Right cardiac atrium (tissue), 5 donors: ENCODE measurements at regions of chr5 and their contacts with region 1.

Region 1: DNA sequence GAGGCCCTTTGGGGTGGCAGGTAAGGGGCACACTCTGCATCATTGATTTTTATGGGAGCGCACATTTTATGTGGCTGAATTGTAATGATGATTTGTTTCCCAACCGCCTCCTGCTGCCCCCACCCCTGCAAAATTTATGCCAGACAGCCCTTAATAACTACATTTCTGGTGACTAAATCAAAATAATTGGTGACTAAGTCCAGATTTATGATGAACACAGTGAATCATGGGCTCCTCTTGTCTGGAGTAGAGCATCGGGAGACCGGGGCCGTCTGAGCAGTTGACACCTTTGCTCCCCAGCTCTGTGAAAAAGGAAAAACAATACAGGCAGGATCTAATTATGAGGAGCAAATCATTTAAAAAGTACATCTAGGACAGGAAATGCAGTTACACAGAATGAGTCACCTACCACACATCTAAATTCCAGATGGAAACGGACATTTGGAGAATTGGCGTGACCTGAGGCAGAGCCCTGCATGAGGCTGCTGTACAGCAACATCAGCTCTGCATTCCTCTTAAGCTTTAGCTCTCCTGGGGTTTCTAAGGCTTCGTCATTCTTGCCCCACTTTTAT is 58.9 kb downstream of the DOCK2 start:
- DNase-seq: no peak
- ATAC-seq: no peak
- H3K4me3 ChIP-seq: no peak overlapping the region
- H3K27ac ChIP-seq: no peak overlapping the region
- H3K4me1 ChIP-seq: no peaks in the 10 kb centered on the region
- H3K27me3 ChIP-seq: no peaks in the 10 kb centered on the region

Region 2: GRCh38 chr5:169895926-169896325 is 199.9 kb after region 1 on chr5:
- intact Hi-C with region 1: no loop called
- DNase-seq: peak; percentile 83 to 94 (median 89)
- ATAC-seq: peak; percentile 79 to 91
- H3K4me3 ChIP-seq: no peak overlapping the region
- H3K27ac ChIP-seq: no peak overlapping the region
- H3K4me1 ChIP-seq: no peaks in the 10 kb centered on the region
- H3K27me3 ChIP-seq: no peaks in the 10 kb centered on the region

Region 3: DNA sequence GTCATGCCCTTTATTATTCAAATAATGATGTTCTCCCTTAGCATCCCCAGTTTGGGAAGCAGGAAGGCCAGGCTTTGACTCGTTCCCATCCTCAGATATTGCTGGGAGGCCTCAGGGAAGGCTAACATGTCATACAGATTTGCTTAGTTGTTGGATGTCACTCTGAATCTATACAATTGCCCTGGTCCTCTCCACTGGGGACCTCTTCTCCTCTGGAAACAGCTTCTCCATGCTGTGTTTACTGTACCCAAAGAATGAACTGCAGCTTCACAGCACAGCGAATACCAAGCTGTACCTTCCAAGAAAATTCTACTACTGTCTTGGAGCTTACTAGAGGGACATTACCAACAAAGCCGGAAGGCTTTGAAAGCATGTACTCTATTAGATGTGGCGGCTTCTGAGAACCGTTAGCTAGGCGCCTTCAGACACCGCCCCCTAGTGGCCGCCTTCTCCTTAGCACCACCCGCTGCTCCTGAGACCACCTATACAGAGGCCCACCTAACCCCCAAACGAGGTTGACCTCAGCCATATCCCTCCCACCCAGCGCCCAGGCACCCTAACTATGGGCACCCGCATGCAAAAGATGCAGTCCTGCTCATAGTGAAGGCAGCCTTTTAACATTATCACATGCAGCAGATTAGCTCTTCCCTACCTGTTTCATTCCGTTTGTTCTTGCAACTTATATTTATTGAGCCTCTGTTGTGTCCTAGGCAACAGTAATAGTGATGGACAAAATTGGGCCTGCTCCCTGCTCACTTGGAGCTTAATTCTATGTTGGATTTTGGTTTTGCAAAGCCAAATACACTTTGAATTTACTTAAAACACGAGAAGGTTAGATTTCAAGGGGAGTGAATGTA is 374.8 kb after region 1 on chr5:
- intact Hi-C with region 1: loop called in 2 of 4 experiments (anchors 5 to 10 kb)
- DNase-seq: peak in 2 of 3 donors; percentile 66 to 78
- ATAC-seq: peak; percentile 58 to 61
- H3K4me3 ChIP-seq: no peak overlapping the region
- H3K27ac ChIP-seq: no peak overlapping the region
- H3K4me1 ChIP-seq: no peaks in the 10 kb centered on the region
- H3K27me3 ChIP-seq: no peaks in the 10 kb centered on the region

Region 4: DNA sequence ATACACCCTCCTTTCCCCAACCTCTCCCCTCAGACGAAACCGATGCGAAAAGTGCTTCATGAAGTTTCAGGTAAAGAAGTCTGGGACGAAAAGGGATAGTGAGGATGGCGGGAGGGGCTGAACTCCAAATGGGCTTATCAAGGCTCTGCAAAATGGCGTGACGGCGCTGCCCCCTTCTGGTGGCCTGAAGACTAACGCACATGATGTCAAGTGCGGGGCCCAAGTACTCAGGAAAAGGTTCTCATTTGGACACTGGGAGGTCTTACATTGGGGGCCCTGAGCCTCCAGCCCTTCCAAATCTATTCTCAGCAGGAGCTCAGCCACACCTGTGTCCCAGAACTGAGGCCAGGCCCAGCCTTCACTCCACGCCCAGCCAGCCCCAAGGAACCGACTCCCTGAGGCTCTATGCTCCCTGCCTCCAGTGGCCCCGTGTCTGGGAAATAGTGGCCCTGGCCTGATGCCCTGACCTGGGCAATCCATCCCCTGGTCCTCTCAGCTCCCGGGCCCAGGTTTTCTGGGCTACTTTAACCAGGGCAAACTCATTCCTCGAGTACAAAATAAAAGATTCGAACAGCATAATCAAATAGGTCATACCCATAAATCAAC is 927.7 kb after region 1 on chr5:
- intact Hi-C with region 1: no loop called
- DNase-seq: peak in 2 of 3 donors; percentile 71 to 78
- ATAC-seq: peak; percentile 23 to 43
- H3K4me3 ChIP-seq: no peak overlapping the region
- H3K27ac ChIP-seq: no peak overlapping the region
- H3K4me1 ChIP-seq: no peaks in the 10 kb centered on the region
- H3K27me3 ChIP-seq: no peaks in the 10 kb centered on the region